Psoas muscle (tissue), 8 donors: ENCODE measurements at regions of chr2 and their contacts with region 1.

Region 1: GRCh38 chr2:54977149-54977548 is 73.1 kb downstream of the RTN4 start:
- DNase-seq: no peak
- ATAC-seq: peak in 1 of 4 donors; percentile 16
- H3K4me3 ChIP-seq: peak overlapping the region; percentile 36
- H3K27ac ChIP-seq: peak overlapping the region; percentile 95
- H3K4me1 ChIP-seq: peaks cover 89% of the 10 kb centered on the region
- H3K27me3 ChIP-seq: no peaks in the 10 kb centered on the region
- CTCF ChIP-seq: no peak

Region 2: DNA sequence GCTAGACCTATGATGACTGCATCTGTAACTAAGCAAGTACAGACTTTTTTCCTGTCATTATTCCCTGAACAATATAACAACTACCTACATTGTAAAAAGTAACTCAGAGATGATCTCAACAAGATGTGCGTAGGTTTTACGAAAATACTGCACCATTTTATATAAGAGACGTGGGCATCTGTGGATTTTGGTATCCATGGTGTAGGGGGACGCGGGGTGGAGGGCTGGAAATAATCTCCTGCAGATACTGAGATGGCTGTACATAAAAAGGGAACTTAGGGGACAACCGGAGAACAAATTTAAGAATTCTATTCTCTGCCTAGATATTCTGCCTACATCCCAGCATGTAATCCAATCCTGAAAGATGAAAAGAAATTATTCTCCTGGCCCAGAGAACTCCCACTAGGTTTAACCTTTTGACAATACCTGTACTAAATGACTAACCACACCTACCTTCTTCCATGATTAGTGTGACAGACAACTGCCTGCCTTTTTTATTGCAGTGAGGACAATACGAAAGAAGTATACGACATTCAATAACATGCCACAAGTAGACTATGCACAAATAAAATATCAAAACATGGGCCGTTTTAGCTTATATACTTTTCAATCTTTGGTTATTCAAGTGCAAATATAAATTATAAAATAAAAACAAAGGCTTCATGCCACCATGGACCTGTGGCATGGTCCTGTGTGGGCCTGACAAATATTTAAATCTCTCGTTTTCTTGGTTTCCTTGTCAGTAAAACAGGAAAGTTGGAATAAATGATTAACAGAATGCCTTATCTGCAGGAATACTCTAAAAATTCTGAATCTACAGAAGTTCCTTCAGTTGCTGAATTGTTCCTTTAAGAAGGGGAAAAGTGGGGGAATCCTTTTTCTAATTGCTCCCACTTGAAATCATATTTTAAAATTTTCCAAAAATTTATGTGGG is 26.8 kb after region 1 on chr2:
- intact Hi-C with region 1: loop called (anchors 2 kb)
- DNase-seq: no peak
- ATAC-seq: no peak
- H3K4me3 ChIP-seq: peak overlapping the region; percentile 72
- H3K27ac ChIP-seq: peak overlapping the region; percentile 95
- H3K4me1 ChIP-seq: peaks cover 55% of the 10 kb centered on the region
- H3K27me3 ChIP-seq: no peaks in the 10 kb centered on the region
- CTCF ChIP-seq: no peak

Region 3: DNA sequence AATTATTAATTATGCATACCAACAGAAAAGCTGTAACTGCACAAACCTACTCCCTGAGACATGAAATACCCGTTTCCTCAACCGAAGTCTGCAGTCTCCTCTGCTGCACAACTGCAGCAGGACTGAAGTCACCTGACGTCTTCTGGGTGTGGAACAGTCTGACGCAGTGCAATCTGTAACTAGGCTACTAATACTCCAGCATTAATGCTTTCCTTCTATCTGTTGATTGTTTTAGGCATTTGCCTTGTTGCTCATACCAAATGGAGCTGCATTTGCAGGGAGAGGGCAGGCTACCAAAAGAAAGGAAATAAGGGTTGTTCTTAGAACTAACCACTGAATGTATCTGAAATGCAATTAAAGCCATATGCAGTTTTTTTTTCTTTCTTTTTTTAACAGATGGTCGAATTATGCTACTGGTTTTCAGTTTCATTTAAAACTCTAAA is 33.0 kb after region 1 on chr2:
- intact Hi-C with region 1: loop called in 1 of 2 experiments (anchors 2 kb)
- DNase-seq: peak; percentile 33 to 70
- ATAC-seq: peak; percentile 85 to 89 (median 88)
- H3K4me3 ChIP-seq: peak overlapping the region; percentile 72
- H3K27ac ChIP-seq: peak overlapping the region; percentile 95
- H3K4me1 ChIP-seq: peaks cover 49% of the 10 kb centered on the region
- H3K27me3 ChIP-seq: no peaks in the 10 kb centered on the region
- CTCF ChIP-seq: no peak

Region 4: DNA sequence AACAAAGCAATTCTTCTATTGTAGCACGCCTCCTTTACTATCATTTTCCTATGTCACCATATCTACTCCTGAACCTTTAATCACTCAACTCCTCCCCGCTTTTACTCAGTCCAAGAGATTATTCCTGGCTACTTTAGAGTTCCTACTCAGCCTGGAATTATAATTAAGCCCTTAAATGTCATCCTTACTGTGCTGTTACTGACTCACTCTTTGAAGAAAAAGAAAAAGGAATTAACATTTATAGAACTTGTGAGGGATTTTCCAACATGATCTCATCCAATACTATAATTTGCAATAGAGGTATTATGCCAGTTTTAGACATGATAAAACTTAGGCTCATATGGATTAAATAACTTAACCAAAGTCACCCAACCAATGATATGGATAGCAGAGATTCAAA is 380.8 kb after region 1 on chr2:
- intact Hi-C with region 1: no loop called
- DNase-seq: no peak
- ATAC-seq: no peak
- H3K4me3 ChIP-seq: no peak overlapping the region
- H3K27ac ChIP-seq: no peak overlapping the region
- H3K4me1 ChIP-seq: no peaks in the 10 kb centered on the region
- H3K27me3 ChIP-seq: no peaks in the 10 kb centered on the region
- CTCF ChIP-seq: no peak